Heart left ventricle (tissue), 16 donors: ENCODE measurements at regions of chr12 and their contacts with region 1.

Region 1: DNA sequence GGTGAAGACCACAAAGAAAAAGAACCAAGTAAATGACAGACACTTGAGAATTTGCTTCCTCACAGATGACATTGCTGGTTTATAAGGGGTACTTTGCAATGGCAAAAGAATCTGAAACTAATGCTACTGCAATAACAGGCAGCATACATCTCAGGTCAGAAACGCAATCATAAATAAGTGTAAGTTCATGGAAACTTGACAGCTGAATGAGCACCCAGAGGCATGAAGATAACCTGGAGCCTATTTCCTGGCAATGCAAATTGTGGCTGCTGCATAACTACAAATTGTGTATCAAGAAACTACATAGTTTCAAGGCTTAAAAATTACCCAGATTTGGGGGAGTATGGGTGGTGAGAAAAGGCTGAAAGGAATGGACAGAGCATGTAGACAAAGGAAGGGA is 8.5 kb upstream of the MYO1A start:
- DNase-seq: no peak
- ATAC-seq: no peak
- H3K4me3 ChIP-seq: no peak overlapping the region
- H3K27ac ChIP-seq: no peak overlapping the region
- H3K4me1 ChIP-seq: peaks cover 0 to 25% (median 0%) of the 10 kb centered on the region in 12 donors
- H3K27me3 ChIP-seq: no peaks in the 10 kb centered on the region
- CTCF ChIP-seq: no peak
- POLR2A ChIP-seq: no peak

Region 2: DNA sequence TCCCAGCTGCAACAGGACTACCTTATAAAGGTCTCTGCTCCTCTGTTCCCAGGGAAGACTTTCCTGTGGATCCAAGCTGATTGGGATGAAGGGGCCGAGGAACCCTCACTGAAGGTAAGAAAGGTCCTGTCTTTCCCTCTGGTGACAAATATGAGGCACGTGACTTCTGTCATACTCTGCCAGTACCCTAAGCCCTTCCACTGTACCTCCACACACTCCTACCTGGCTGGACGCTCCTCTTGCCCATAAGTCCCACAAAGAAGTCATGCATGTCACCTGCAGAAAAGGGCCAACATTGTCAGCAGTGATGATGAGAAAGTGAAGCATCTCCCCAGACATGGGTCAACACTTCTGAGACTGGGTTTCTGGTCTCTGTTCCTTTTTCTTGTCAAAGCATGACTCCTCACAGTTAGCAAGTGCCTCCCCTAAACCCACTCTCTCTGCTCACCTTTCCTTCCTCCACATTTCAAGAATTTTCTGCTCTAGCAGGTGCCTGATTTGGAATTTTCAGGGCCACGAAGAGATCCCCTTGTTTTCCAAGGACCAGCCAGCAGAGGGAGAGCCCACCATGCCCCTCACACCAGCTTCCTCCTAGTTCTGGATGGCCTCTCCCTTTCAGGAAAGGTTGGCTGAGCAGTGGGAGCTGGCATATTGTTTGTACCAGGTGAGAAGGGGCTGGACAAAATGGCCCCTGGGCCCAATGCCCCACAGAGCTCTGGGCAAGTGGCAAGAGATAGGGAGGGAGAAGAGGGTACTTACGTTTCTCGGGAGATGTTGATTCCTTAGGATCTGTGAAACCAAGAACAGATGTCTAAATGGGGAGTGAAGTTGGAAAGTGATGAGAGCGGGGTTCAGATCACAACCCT is 45.6 kb before region 1 on chr12:
- intact Hi-C with region 1: loop called in 5 of 10 experiments (anchors 5 kb)
- DNase-seq: no peak
- ATAC-seq: no peak
- H3K4me3 ChIP-seq: no peak overlapping the region
- H3K27ac ChIP-seq: no peak overlapping the region
- H3K4me1 ChIP-seq: peaks cover 0 to 7% (median 0%) of the 10 kb centered on the region in 12 donors
- H3K27me3 ChIP-seq: peaks cover 0 to 34% (median 10%) of the 10 kb centered on the region in 9 donors
- CTCF ChIP-seq: no peak
- POLR2A ChIP-seq: no peak

Region 3: DNA sequence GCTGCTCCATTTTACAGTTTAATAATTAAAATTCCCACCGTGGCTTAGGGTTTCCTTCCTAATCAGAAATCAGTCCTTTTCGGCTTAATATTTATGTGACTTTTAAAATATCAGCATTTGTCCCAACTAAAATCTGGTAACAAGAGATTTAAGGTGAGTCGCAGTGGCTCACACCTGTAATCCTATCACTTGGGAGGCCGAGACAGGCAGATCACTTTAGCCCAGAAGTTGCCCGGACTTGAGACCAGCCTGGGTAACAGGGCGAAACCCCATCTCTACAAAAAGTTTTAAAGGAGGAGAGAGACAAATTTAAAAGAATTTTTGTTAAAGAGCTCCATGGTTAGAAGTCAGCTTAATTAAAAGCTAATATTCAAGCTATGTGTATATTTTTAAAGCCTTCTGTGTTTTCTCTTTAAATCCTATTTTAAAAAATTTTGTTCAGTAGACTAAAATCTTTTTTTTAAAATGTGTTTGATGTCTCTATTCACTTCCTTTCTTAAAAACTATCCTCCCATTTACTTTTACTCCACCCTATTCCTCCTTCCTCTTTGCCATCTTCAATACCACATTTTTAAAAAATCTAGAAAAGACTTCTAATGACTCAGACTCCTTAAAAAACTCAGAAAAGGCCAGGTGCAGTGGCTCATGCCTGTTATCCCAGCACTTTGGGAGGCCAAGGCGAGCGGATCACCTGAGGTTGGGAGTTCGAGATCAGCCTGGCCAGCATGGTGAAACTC is 38.3 kb before region 1 on chr12:
- intact Hi-C with region 1: loop called in 1 of 10 experiments (anchors 5 kb)
- DNase-seq: no peak
- ATAC-seq: no peak
- H3K4me3 ChIP-seq: no peak overlapping the region
- H3K27ac ChIP-seq: no peak overlapping the region
- H3K4me1 ChIP-seq: no peaks in the 10 kb centered on the region
- H3K27me3 ChIP-seq: peaks cover 0 to 21% (median under 1%) of the 10 kb centered on the region in 9 donors
- CTCF ChIP-seq: no peak
- POLR2A ChIP-seq: no peak

Region 4: GRCh38 chr12:57088459-57089248 is 30.2 kb after region 1 on chr12 and contains the start of gene NAB2:
- intact Hi-C with region 1: no loop called
- DNase-seq: peak; percentile 97 to 98 (median 98)
- ATAC-seq: peak; percentile 77 to 87 (median 81)
- H3K4me3 ChIP-seq: peak within 1 kb of the TSS; percentile 52 to 97 (median 81)
- H3K27ac ChIP-seq: peak within 1 kb of the TSS; percentile 93 to 100 (median 99)
- H3K4me1 ChIP-seq: peaks cover 0 to 71% (median 44%) of the 10 kb centered on the region in 12 donors
- H3K27me3 ChIP-seq: no peaks in the 10 kb centered on the region
- CTCF ChIP-seq: no peak
- POLR2A ChIP-seq: peak in 1 of 2 donors; percentile 60
- total RNA-seq, gene NAB2: 8.7 to 20.3 (median 11.8) TPM